BJ (cell line): ENCODE measurements at regions of chr6 and their contacts with region 1.

Region 1: DNA sequence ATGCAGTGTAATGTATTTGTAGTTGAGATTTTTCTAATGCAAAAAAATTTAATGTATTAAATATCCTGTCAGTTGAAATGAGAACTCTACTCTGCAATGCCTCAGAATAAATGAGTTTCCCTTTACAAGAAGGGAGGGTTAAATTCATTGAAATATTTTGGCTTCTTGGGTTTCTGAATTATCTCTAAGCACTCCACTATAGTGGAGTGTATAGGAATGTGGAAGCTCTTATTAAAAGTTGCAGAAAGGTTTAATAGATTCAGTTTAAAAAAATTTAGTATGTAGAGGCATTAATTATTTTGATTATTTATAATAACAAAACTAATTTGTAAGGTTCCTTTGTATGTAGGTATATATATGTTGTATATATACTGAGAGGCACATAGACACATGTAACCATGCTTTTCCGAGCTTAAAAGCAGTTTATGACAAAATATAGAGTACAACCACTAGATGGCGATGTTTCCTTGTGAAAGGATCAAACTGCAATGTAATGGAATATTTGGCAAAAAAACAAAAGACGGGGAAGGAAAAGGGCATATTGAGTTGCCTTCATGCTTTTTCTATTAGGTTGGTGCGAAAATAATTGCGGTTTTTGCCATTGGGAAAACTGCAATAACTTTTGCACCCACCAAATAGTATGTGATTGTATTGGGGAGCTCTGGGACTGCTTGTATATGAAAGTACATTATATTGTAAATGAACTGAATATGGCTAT is 144.2 kb downstream of the MYO6 start:
- DNase-seq: peak; percentile 22
- H3K4me3 ChIP-seq: no peak overlapping the region
- H3K27me3 ChIP-seq: no peaks in the 10 kb centered on the region
- CTCF ChIP-seq: peak; percentile 65

Region 2: GRCh38 chr6:75876152-75876551 is 17.1 kb before region 1 on chr6:
- CTCF ChIA-PET with region 1: interaction called, 18 read pairs
- POLR2A ChIA-PET with region 1: no interaction called
- DNase-seq: no peak
- H3K4me3 ChIP-seq: no peak overlapping the region
- H3K27me3 ChIP-seq: no peaks in the 10 kb centered on the region
- CTCF ChIP-seq: no peak

Region 3: DNA sequence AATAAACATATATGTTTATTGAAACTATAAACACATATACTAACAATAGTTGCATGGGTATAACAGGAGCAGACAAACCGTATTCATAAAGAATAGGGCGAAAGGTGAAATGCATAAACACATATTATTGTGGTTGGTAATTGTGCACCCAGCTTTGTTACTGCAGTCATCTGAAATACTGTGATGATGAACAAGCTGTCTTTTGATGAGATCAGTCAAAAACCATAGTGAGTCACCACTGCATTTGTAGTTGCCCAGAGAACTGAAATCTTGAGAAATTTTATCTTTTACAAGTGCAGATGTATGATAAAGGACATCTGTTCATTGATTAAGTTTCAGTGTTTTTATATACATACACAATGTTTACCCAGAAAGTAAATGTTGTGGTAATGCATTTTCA is 10.5 kb before region 1 on chr6:
- CTCF ChIA-PET with region 1: interaction called, 22 read pairs
- POLR2A ChIA-PET with region 1: no interaction called
- DNase-seq: peak; percentile 9
- H3K4me3 ChIP-seq: no peak overlapping the region
- H3K27me3 ChIP-seq: no peaks in the 10 kb centered on the region
- CTCF ChIP-seq: no peak

Region 4: GRCh38 chr6:75906871-75907270 is 13.7 kb after region 1 on chr6:
- CTCF ChIA-PET with region 1: interaction called, 12 read pairs
- POLR2A ChIA-PET with region 1: no interaction called
- DNase-seq: no peak
- H3K4me3 ChIP-seq: no peak overlapping the region
- H3K27me3 ChIP-seq: no peaks in the 10 kb centered on the region
- CTCF ChIP-seq: no peak